Uterus (tissue), 4 donors: ENCODE measurements at regions of chr22 and their contacts with region 1.

Region 1: GRCh38 chr22:32528984-32529982 is 54.7 kb downstream of the FBXO7 start:
- DNase-seq: peak; percentile 87 to 94
- H3K4me3 ChIP-seq: no peak overlapping the region
- H3K27ac ChIP-seq: peak overlapping the region; percentile 77 to 80
- H3K4me1 ChIP-seq: peaks cover 4 to 16% of the 10 kb centered on the region in 2 donors
- H3K27me3 ChIP-seq: no peaks in the 10 kb centered on the region
- CTCF ChIP-seq: peak; percentile 87 to 95 (median 93)
- POLR2A ChIP-seq: no peak

Region 2: DNA sequence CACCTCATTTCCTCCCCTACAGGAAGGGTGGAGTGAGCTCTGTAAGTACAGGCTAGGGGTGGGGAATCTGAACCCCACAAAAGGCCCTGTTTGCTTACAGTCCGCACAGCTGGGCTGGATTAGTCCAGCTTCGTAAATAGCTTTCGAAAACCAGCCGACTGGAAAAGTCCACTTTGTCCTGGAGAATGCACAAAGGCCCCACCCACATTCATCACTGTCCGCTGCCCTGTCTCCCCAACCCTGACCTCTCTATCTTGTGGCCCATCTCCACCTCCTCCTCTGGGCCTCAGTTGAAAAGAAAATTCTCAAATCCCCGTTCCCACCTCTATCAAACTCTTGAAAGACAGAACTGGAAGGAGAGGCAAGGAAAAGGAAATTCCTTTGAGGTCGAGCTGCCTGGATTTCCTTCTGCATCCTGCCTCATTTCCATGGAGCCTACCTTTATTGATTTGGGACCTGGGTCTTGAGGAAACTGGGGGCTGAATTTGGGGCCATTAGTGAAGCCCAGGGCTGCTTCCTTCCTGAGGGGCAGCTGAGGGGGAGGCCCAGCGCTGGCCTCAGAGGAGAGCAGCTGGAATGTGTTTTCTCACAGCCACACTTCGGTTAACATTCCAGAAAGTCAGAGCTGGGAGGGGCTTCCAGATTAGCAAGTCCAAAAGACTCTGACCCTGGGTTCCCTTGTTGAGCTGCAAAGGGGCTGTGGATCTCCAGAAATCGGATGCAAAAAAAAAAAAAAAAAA is 92.9 kb after region 1 on chr22:
- intact Hi-C with region 1: no loop called
- DNase-seq: peak; percentile 72 to 76
- H3K4me3 ChIP-seq: no peak overlapping the region
- H3K27ac ChIP-seq: peak overlapping the region; percentile 85 to 97
- H3K4me1 ChIP-seq: peaks cover 10 to 26% of the 10 kb centered on the region in 2 donors
- H3K27me3 ChIP-seq: no peaks in the 10 kb centered on the region
- CTCF ChIP-seq: no peak
- POLR2A ChIP-seq: no peak

Region 3: DNA sequence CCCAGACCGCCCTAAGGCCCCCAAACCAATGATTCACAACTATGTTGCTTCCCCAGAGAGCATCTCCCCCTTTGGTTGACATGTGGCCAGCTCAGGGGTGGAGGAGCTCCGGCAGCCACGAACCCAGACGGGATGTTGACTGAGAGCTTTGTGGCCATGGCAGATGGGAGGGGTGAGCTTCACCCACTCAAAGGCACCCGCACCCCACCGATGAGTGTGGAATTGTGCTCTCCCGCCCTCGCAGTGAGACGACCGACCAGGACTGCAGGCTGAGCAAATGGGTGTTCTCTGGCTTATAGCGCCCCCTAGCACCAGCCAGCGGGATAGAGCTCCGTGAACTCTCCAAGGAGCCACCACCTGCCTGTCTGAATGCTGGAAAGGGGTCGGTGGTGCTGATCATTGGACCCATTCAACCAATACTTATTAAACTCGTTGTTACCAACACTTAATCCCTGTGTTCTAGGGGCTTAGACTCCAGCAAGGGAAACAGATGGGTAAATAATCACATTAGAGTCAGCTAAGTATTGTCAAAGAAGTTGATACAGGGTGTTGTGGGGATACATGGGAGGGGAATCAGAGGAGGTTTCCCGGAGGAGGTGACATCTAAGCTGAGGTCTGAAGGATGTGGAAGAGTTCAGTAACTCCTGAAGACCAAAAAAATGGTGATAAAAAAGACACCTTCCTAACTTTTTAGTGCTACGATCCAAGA is 267.7 kb after region 1 on chr22:
- intact Hi-C with region 1: loop called (anchors 2 kb)
- DNase-seq: peak; percentile 76 to 81
- H3K4me3 ChIP-seq: no peak overlapping the region
- H3K27ac ChIP-seq: peak overlapping the region; percentile 39 to 49
- H3K4me1 ChIP-seq: no peaks in the 10 kb centered on the region
- H3K27me3 ChIP-seq: no peaks in the 10 kb centered on the region
- CTCF ChIP-seq: peak; percentile 76 to 93 (median 88)
- POLR2A ChIP-seq: no peak

Region 4: GRCh38 chr22:33000342-33001280 is 471.3 kb after region 1 on chr22:
- intact Hi-C with region 1: loop called (anchors 5 kb)
- DNase-seq: peak; percentile 44 to 71
- H3K4me3 ChIP-seq: no peak overlapping the region
- H3K27ac ChIP-seq: no peak overlapping the region
- H3K4me1 ChIP-seq: no peaks in the 10 kb centered on the region
- H3K27me3 ChIP-seq: no peaks in the 10 kb centered on the region
- CTCF ChIP-seq: peak; percentile 91 to 92 (median 92)
- POLR2A ChIP-seq: no peak